ENCODE measurements at regions of chr1 and their contacts with region 1.

Region 1: DNA sequence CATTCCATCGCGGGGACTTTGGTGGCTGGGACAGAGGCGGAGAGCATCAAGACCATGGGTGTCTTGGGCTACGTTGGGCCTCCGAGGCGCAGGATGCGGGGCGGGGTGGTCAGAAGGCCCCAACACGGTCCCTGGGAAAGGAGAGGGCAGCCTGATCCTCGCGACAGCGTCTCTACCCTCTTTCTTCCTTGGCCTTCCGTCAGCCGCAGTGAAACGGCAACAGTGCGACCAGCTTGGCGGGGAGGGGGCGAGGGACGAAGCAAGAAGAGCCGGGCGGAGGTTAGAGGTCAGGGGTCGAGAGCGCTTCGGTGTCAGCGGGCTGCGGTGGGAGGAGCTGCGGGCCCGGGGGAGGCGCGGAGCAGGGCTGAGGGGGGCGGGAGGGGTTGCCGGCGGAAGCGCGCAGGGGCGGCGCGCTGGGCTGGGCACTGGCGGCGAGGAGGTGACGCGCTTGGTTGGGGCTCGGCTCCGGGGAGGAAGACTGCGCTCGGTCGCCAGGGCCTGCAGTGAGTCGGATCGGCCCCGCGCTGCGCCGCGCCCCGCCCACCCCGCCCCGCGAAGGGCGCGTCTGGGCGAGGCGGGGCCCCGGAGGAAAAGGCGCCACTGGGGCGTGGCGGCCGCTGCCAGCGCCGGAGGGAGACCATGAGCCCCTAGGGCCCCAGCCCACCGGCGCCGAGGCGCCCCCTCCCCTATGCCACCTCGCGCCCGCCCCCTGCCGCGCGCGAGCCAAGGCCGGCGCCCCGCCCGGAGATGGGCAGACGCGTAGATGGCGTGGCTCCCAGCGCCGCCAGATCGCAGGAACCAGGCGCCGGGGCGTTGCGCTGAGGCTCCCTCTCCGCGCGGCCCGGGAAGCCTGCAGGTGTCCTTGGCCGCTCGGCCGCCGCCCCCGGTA is at the start of gene KCNC4:
- DNase-seq: peak; percentile 96
- ATAC-seq: peak; percentile 92
- H3K4me3 Mint-ChIP-seq: peak within 1 kb of the TSS; percentile 81
- H3K27ac Mint-ChIP-seq: peak within 1 kb of the TSS; percentile 95
- H3K4me1 Mint-ChIP-seq: peaks cover 42% of the 10 kb centered on the region
- H3K27me3 Mint-ChIP-seq: peaks cover 8% of the 10 kb centered on the region
- total RNA-seq, gene KCNC4: 7.5 to 8.3 TPM

Region 2: GRCh38 chr1:110196917-110197765 is 12.8 kb before region 1 on chr1:
- CTCF ChIA-PET with region 1: interaction called, 41 read pairs
- POLR2A ChIA-PET with region 1: interaction called, 3 read pairs
- DNase-seq: peak; percentile 66
- ATAC-seq: peak; percentile 87
- H3K4me3 Mint-ChIP-seq: no peak overlapping the region
- H3K27ac Mint-ChIP-seq: no peak overlapping the region
- H3K4me1 Mint-ChIP-seq: peaks cover 2% of the 10 kb centered on the region
- H3K27me3 Mint-ChIP-seq: no peaks in the 10 kb centered on the region

Region 3: DNA sequence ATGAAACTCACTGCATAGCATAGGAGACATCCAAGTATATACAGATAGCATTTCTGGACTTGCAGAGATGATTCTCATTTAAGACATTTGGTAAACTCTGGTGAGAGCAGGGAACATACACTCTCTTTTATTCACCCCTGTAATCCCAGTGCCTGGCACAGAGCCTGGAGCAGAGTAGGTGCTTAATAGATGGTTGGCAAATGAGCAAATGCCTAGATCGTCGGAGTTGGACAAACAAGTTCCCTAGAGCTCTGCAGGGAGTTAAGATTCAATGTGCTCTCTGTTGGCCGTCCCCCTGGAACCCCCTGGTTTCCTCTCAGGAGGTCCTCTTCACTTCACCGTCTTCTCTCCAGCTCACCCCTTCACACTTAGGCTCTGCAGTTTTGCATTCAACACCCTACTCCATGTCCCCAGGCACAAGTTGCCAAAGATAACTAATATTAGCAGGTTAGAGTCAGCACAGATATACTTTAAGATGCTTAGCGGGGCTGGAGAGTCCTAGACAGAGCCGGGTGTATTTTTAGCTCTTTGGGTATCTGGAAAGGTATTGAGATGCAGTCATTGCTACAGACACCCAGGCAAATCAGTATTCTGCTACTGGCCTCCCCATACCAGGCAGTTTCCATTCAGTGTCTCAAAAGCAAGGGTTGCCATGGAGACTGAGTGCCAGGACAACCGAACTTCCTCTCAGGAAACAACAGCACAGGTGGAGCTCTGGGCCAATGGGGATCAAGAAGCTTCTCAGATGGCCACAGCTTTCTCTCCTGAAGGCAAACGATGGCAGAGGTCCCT is 45.2 kb after region 1 on chr1:
- CTCF ChIA-PET with region 1: interaction called, 10 read pairs
- POLR2A ChIA-PET with region 1: no interaction called
- DNase-seq: no peak
- ATAC-seq: peak; percentile 74
- H3K4me3 Mint-ChIP-seq: no peak overlapping the region
- H3K27ac Mint-ChIP-seq: no peak overlapping the region
- H3K4me1 Mint-ChIP-seq: peaks cover 1% of the 10 kb centered on the region
- H3K27me3 Mint-ChIP-seq: peaks cover 5% of the 10 kb centered on the region

Region 4: GRCh38 chr1:110300412-110301085 is 90.6 kb after region 1 on chr1:
- CTCF ChIA-PET with region 1: interaction called, 460 read pairs
- POLR2A ChIA-PET with region 1: no interaction called
- DNase-seq: no peak
- ATAC-seq: no peak
- H3K4me3 Mint-ChIP-seq: no peak overlapping the region
- H3K27ac Mint-ChIP-seq: no peak overlapping the region
- H3K4me1 Mint-ChIP-seq: no peaks in the 10 kb centered on the region
- H3K27me3 Mint-ChIP-seq: peaks cover 7% of the 10 kb centered on the region

Region 5: DNA sequence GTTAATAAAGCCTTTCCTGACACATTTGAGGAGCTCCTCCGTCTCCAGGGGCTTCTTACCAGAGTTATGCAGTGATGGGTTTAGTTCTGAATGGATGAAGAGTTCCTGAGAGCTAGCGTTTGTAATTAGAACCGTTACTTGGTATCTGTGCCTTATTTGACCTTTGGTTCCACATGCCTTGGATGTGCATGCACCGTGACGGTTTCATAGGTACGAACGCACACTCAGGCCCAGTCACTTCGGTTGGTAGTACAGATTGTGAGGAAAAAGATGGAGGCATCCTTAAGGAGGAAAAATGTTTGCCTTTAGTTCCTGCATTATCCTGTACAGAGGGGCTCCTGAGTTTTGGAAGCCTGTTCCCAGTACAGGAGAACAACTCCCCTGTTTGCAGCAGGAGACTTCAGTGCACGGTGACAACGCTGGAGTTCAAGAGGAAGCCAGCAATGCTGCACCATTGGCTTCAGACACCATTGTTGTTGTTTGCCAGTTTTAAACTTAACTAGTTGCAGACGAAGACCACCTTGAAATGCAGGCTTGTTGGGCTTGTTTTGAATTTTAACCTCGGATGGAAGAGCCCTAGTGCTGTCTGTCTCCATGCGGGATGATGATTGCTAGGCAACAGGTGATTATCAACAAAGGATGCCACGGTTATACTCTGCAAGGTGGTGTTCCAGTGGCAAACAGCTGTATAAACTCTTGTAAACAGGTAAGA is 137.4 kb after region 1 on chr1:
- CTCF ChIA-PET with region 1: interaction called, 31 read pairs
- POLR2A ChIA-PET with region 1: interaction called, 6 read pairs
- DNase-seq: no peak
- ATAC-seq: no peak
- H3K4me3 Mint-ChIP-seq: peak overlapping the region; percentile 29
- H3K27ac Mint-ChIP-seq: no peak overlapping the region
- H3K4me1 Mint-ChIP-seq: peaks cover 84% of the 10 kb centered on the region
- H3K27me3 Mint-ChIP-seq: no peaks in the 10 kb centered on the region

Region 6: GRCh38 chr1:110460253-110461220 is 250.6 kb after region 1 on chr1:
- CTCF ChIA-PET with region 1: interaction called, 86 read pairs
- POLR2A ChIA-PET with region 1: no interaction called
- DNase-seq: peak; percentile 88
- ATAC-seq: peak; percentile 88
- H3K4me3 Mint-ChIP-seq: no peak overlapping the region
- H3K27ac Mint-ChIP-seq: no peak overlapping the region
- H3K4me1 Mint-ChIP-seq: no peaks in the 10 kb centered on the region
- H3K27me3 Mint-ChIP-seq: no peaks in the 10 kb centered on the region

Measured in activated CD8-positive, alpha-beta T cell treated with anti-CD3 and anti-CD28 coated beads, Interleukin-2, amount 10 ng/mL, durations not matched to agents 7 days and 5 days (primary cell).